Activated CD4-positive, alpha-beta memory T cell treated with anti-CD3 and anti-CD28 coated beads for 36 hours (primary cell): ENCODE measurements at regions of chr2 and their contacts with region 1.

Region 1: GRCh38 chr2:30711646-30712085 is 95.6 kb downstream of the CAPN13 start:
- DNase-seq: peak; percentile 89
- H3K4me3 Mint-ChIP-seq: no peak overlapping the region
- H3K27ac Mint-ChIP-seq: no peak overlapping the region
- H3K4me1 Mint-ChIP-seq: peaks cover 10% of the 10 kb centered on the region
- H3K27me3 Mint-ChIP-seq: peaks cover 3% of the 10 kb centered on the region

Region 2: DNA sequence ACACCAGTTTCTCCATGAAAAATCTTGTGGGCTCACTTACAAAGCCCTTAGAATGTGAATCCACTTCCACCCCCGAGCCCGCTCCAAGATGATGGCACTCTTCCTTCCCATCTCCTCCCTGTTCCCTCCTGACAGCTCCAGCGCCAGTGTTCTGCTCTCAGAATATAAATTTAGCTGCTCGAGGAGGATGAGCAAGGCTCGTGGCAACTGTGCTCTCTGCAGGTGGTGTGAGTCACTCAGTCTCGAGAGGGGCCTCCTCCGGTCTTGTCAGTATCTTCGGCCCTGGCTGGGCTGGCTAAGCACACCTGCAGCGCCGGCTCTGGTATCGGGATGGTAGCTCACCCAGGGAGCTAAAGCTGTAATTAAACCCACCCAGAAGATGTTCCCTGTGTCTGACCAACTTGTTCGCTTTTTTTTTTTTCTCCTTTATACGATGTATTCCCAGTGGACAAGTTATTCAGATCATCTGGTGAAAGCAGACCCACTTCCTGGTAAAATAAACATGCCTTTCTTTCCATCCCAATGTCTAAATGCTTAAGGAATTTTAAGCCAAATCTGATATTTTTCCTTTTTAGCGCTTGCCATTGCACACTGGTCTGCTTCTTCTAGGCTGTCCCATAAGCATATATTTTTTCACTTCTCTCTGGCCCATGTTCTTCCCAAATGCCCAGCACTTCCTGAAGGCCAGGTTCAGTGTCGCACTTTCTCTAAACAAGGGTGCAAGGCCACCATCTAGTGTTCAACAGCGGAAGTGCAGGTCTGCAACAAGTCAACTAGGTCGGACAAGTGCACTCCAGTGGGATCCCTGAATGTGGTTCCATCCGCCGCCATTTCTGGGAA is 596.3 kb before region 1 on chr2:
- CTCF ChIA-PET with region 1: interaction called, 14 read pairs
- POLR2A ChIA-PET with region 1: no interaction called
- intact Hi-C with region 1: no loop called
- DNase-seq: peak; percentile 78
- H3K4me3 Mint-ChIP-seq: no peak overlapping the region
- H3K27ac Mint-ChIP-seq: no peak overlapping the region
- H3K4me1 Mint-ChIP-seq: peaks cover 4% of the 10 kb centered on the region
- H3K27me3 Mint-ChIP-seq: peaks cover 2% of the 10 kb centered on the region

Region 3: GRCh38 chr2:30165050-30165520 is 546.6 kb before region 1 on chr2:
- CTCF ChIA-PET with region 1: interaction called, 679 read pairs
- POLR2A ChIA-PET with region 1: interaction called, 9 read pairs
- intact Hi-C with region 1: loop called (anchors 1 kb)
- DNase-seq: peak; percentile 73
- H3K4me3 Mint-ChIP-seq: no peak overlapping the region
- H3K27ac Mint-ChIP-seq: no peak overlapping the region
- H3K4me1 Mint-ChIP-seq: peaks cover 7% of the 10 kb centered on the region
- H3K27me3 Mint-ChIP-seq: no peaks in the 10 kb centered on the region

Region 4: DNA sequence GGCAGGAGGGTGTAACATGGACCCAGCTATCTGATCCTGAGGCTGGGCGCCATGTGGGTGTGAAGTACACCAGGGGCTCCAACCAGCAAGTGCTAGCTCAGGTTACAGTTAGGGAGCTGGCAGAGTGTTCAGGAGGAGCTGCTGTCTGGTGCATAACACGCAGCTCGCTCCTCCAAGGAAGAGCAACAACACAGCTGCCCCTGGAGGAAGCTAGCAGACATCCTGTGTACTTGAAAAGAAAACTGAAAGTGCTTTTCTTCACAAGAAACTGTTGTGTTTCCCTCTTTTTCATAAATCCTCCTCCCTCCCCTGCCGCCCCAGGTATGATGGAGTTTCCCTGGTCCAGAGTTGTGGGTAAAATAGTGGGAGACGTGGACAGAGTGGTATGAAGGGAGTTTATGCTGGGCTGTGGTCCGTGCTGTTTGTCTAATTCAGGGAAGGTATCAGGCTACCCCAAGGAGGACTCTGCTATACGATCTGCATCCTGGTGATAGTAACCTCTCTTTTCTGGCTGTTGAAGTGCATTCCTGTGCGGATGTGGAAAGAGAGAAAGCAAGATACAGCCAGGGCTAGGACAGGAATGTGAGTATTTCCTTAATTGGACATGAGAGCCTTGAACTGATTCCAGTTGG is 486.4 kb before region 1 on chr2:
- CTCF ChIA-PET with region 1: interaction called, 30 read pairs
- POLR2A ChIA-PET with region 1: no interaction called
- intact Hi-C with region 1: no loop called
- DNase-seq: peak; percentile 62
- H3K4me3 Mint-ChIP-seq: peak overlapping the region; percentile 83
- H3K27ac Mint-ChIP-seq: peak overlapping the region; percentile 97
- H3K4me1 Mint-ChIP-seq: peaks cover 70% of the 10 kb centered on the region
- H3K27me3 Mint-ChIP-seq: no peaks in the 10 kb centered on the region

Region 5: DNA sequence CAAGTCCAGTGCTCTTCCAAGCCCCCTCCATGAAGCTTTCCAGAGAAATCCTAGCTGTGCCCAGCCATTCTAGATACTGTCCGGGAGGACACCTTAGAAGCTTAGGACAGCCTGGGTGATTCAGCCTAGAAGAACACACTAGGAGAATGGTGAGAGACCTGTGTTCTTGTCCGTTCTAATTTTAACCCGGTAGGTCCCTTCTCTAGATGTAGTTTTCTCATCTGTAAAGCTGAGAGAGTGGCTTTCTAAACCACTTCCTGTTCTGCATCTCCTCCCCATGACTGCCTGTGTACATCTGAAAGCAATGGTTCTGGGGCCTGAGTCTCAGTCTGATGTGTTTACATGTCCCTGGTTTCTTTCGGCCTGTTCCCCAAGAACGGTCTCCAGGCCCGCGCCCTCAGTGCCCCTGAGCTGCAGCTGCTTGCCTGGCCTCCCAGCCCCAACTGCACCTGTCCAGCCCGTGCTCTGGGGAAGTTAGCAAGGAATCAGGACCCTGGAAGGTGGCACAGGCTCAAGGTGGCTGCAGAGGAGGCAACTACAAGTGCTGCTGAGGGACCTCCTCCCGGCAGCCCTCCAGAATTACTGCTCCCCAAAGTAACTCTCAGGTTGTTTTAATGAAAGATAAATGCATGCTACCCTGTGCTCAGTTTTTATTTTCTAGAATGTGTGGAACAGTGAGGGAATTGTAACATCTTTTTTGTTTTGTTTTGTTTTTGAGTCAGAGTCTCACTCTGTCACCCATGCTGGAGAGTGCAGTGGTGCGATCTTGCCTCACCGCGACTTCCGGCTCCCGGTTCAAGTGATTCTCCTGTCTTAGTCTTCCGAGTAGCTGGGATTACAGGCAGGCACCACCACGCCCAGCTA is 374.5 kb before region 1 on chr2:
- CTCF ChIA-PET with region 1: interaction called, 6 read pairs
- POLR2A ChIA-PET with region 1: no interaction called
- intact Hi-C with region 1: loop called (anchors 1 kb)
- DNase-seq: peak; percentile 83
- H3K4me3 Mint-ChIP-seq: peak overlapping the region; percentile 68
- H3K27ac Mint-ChIP-seq: peak overlapping the region; percentile 96
- H3K4me1 Mint-ChIP-seq: peaks cover 75% of the 10 kb centered on the region
- H3K27me3 Mint-ChIP-seq: no peaks in the 10 kb centered on the region

Region 6: GRCh38 chr2:30721668-30722647 is 10.3 kb after region 1 on chr2:
- CTCF ChIA-PET with region 1: interaction called, 42 read pairs
- POLR2A ChIA-PET with region 1: no interaction called
- intact Hi-C with region 1: no loop called
- DNase-seq: no peak
- H3K4me3 Mint-ChIP-seq: no peak overlapping the region
- H3K27ac Mint-ChIP-seq: no peak overlapping the region
- H3K4me1 Mint-ChIP-seq: no peaks in the 10 kb centered on the region
- H3K27me3 Mint-ChIP-seq: peaks cover 8% of the 10 kb centered on the region

Region 7: GRCh38 chr2:31107591-31108300 is 396.1 kb after region 1 on chr2:
- CTCF ChIA-PET with region 1: no interaction called
- POLR2A ChIA-PET with region 1: no interaction called
- intact Hi-C with region 1: no loop called
- DNase-seq: no peak
- H3K4me3 Mint-ChIP-seq: no peak overlapping the region
- H3K27ac Mint-ChIP-seq: no peak overlapping the region
- H3K4me1 Mint-ChIP-seq: no peaks in the 10 kb centered on the region
- H3K27me3 Mint-ChIP-seq: peaks cover 13% of the 10 kb centered on the region

Region 8: GRCh38 chr2:31333527-31334183 is 622.0 kb after region 1 on chr2:
- CTCF ChIA-PET with region 1: interaction called, 108 read pairs
- POLR2A ChIA-PET with region 1: no interaction called
- intact Hi-C with region 1: loop called (anchors 1 kb)
- DNase-seq: peak; percentile 84
- H3K4me3 Mint-ChIP-seq: no peak overlapping the region
- H3K27ac Mint-ChIP-seq: no peak overlapping the region
- H3K4me1 Mint-ChIP-seq: no peaks in the 10 kb centered on the region
- H3K27me3 Mint-ChIP-seq: peaks cover 2% of the 10 kb centered on the region